ENCODE measurements at regions of chrX and their contacts with region 1.

Region 1: DNA sequence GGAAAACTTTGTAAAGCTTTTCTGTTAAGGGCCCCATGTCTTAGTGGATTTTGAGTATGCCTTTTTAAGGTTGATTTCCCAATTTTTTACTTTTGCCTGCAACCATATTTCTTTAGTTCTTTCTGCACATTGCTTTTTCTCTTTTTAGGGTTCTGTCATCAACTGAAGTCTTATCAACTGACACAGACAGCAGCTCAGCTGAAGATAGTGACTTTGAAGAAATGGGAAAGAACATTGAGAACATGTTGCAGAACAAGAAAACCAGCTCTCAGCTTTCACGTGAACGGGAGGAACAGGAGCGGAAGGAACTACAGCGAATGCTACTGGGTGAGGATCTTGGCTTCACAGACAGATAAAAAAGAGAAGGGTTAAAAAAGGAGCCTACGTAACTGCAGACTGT is 27.8 kb downstream of the TAF1 start:
- DNase-seq: no peak
- ATAC-seq: no peak
- H3K4me3 ChIP-seq: no peak overlapping the region
- H3K4me3 Mint-ChIP-seq: no peak overlapping the region
- H3K27ac ChIP-seq: no peak overlapping the region
- H3K27ac Mint-ChIP-seq: peak overlapping the region; percentile 36
- H3K4me1 ChIP-seq: no peaks in the 10 kb centered on the region
- H3K4me1 Mint-ChIP-seq: no peaks in the 10 kb centered on the region
- H3K27me3 ChIP-seq: no peaks in the 10 kb centered on the region
- H3K27me3 Mint-ChIP-seq: no peaks in the 10 kb centered on the region
- CTCF ChIP-seq: no peak

Region 2: GRCh38 chrX:71466979-71467523 is 73.1 kb after region 1 on chrX:
- CTCF ChIA-PET with region 1: no interaction called
- POLR2A ChIA-PET with region 1: no interaction called
- intact Hi-C with region 1: loop called in 1 of 2 experiments (anchors 10 kb)
- DNase-seq: no peak
- ATAC-seq: no peak
- H3K4me3 ChIP-seq: no peak overlapping the region
- H3K4me3 Mint-ChIP-seq: no peak overlapping the region
- H3K27ac ChIP-seq: no peak overlapping the region
- H3K27ac Mint-ChIP-seq: no peak overlapping the region
- H3K4me1 ChIP-seq: no peaks in the 10 kb centered on the region
- H3K4me1 Mint-ChIP-seq: no peaks in the 10 kb centered on the region
- H3K27me3 ChIP-seq: no peaks in the 10 kb centered on the region
- H3K27me3 Mint-ChIP-seq: no peaks in the 10 kb centered on the region
- CTCF ChIP-seq: no peak

Region 3: DNA sequence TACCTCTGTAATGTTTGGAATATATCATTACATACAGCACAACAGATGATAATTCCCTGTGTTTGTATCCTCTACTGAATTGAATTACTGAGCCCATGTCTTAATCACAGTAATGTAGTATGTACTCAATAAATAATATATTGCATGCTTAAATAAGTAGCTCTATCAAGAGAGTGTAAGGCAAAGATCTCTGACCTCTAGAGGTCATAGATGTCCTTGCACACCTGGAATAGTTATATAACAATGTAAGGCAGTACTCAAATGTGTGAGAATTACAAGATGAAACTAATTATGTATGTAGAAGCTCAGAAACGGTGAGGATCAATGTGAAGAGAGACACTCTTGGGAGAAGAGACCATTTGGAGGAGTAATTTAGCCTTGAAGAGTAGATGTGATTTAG is 170.0 kb after region 1 on chrX:
- CTCF ChIA-PET with region 1: no interaction called
- POLR2A ChIA-PET with region 1: no interaction called
- intact Hi-C with region 1: loop called in 1 of 2 experiments (anchors 5 kb)
- DNase-seq: peak in 1 of 14 experiments; percentile 26
- ATAC-seq: peak; percentile 55
- H3K4me3 ChIP-seq: no peak overlapping the region
- H3K4me3 Mint-ChIP-seq: no peak overlapping the region
- H3K27ac ChIP-seq: no peak overlapping the region
- H3K27ac Mint-ChIP-seq: peak overlapping the region; percentile 4
- H3K4me1 ChIP-seq: no peaks in the 10 kb centered on the region
- H3K4me1 Mint-ChIP-seq: peaks cover 6% of the 10 kb centered on the region
- H3K27me3 ChIP-seq: no peaks in the 10 kb centered on the region
- H3K27me3 Mint-ChIP-seq: no peaks in the 10 kb centered on the region
- CTCF ChIP-seq: no peak

Measured in CD4-positive, alpha-beta T cell (primary cell).